Right lobe of liver (tissue), 6 donors: ENCODE measurements at regions of chr1 and their contacts with region 1.

Region 1: DNA sequence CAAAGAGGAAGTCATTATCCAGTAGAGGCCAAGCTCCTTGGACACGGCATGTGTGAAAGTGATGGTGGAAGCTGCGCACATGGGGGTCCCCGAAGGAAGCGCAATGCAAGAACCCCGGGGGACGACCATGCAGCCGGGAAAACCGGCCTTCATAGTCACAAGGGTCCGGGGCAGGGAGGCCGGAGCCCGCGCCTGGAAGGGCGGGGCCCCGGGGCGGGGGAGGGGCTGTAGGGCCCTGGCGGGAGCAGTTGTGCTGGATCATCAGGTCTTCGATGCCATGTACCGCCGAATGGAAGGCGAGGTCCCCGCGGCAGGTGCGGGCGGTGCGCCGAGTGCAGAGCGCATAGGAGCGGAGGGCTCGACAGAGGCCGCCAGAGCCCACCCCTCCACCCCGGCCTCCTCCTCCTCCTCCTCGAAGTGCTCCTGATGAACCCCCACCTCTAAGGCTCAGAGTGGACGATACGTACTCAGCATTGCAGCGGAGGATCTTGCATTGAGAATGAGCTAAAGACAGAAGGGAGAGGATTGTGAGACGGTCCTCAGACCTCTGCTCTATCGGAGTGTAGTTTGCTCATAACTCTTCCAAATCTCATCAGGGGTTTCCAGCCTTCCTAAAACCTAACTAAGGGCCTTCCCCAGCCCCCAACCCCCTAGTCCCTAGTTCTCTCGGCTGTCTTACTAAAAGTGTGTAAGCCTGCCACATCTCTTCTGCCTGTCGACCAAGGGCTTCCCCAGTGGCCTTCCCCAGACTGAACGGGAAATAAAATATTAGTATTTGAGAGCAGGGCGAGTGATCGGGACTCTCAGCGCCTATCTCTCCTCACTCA is 2.1 kb downstream of the HJV start:
- DNase-seq: peak; percentile 62 to 78 (median 72)
- ATAC-seq: peak; percentile 47 to 61 (median 60)
- H3K4me3 ChIP-seq: peak overlapping the region; percentile 40 to 58 (median 56)
- H3K27ac ChIP-seq: peak overlapping the region; percentile 83 to 91 (median 89)
- H3K4me1 ChIP-seq: peaks cover 0 to 12% (median 0%) of the 10 kb centered on the region in 4 donors
- H3K27me3 ChIP-seq: no peaks in the 10 kb centered on the region
- CTCF ChIP-seq: no peak
- POLR2A ChIP-seq: peak; percentile 33

Region 2: DNA sequence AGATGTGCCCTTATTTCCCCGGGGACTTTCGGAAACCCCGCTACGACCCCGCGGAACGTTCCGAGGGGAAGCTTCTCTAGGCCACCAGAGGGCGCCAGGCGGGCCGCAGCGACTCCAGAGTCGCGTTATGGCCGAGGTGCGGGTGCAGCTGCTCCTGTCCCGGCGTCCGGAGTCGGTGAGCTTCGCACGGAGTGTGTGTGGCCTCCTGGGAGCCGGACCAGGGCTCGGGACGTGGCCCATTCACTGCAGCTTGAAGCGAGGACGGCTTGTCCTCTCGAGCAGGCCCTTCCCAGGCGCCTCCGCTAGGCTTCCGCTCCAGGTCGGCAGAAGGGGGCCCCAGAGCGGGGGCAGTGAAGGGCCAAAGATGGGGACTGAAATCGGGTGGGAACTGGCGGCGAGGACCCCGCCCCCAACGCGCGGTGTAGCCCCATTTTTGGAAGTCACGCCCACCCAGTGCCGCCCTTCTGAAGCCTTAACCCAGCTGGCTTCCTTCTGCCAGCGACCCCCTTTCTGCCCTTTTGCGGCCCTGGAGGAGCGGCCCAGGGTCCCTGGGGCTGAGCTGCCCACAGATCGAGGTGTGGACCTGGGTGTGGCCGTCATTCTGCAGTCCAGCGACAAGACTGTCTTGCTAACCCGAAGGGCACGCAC is 173.8 kb before region 1 on chr1 and contains the start of gene NUDT17:
- intact Hi-C with region 1: loop called (anchors 5 to 10 kb)
- DNase-seq: peak; percentile 83 to 86 (median 85)
- ATAC-seq: peak; percentile 91 to 94 (median 93)
- H3K4me3 ChIP-seq: peak within 1 kb of the TSS; percentile 36 to 58 (median 54)
- H3K27ac ChIP-seq: peak within 1 kb of the TSS in 2 of 3 donors; percentile 37 to 41
- H3K4me1 ChIP-seq: peaks cover 0 to 14% (median 2%) of the 10 kb centered on the region in 4 donors
- H3K27me3 ChIP-seq: no peaks in the 10 kb centered on the region
- CTCF ChIP-seq: peak; percentile 79 to 95 (median 94)
- POLR2A ChIP-seq: peak; percentile 20
- total RNA-seq, gene NUDT17: 0.51 to 2.2 (median 1.0) TPM

Region 3: GRCh38 chr1:145963995-145964901 is 55.2 kb before region 1 on chr1 and contains the starts of genes ANKRD34A and POLR3GL:
- intact Hi-C with region 1: no loop called
- DNase-seq: peak; percentile 95 to 97 (median 97)
- ATAC-seq: peak; percentile 85 to 91 (median 88)
- H3K4me3 ChIP-seq: peak within 1 kb of the TSS; percentile 62 to 74 (median 63)
- H3K27ac ChIP-seq: peak within 1 kb of the TSS; percentile 59 to 79 (median 74)
- H3K4me1 ChIP-seq: peaks cover 0 to 30% (median 7%) of the 10 kb centered on the region in 4 donors
- H3K27me3 ChIP-seq: no peaks in the 10 kb centered on the region
- CTCF ChIP-seq: no peak
- POLR2A ChIP-seq: peak; percentile 88
- total RNA-seq, gene ANKRD34A: 0.14 to 0.88 (median 0.22) TPM in 5 of 6 experiments, not detected in the other
- total RNA-seq, gene POLR3GL: 8.4 to 14.3 (median 11.9) TPM